Endothelial cell of umbilical vein (primary cell): ENCODE measurements at regions of chr12 and their contacts with region 1.

Region 1: DNA sequence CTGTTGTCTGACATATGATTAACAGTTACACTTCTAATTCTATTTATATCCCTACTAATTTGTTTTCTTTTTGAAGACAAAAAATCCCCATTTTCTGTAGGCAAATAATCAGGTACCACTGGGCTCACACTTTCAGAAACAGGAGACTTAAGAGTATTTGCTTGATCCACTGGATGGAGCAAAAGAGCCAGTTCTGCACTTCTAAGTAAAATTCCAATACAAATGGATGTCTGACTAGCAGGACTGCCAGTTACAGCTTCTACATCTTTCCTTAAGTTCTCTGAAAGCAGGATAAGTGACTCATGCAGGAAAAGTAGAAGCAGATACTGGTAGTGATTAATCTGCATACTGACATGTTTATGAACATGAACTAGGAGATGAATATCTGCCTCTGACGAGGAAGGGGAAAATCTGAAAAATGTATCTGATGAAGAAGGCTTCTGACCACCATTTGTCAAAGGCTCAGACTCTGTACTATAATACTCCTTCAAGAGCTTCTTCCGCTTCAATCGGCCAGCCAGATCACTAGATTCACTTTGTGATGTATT is 73.8 kb upstream of the ANKS1B start:
- DNase-seq: peak; percentile 94
- H3K4me3 ChIP-seq: no peak overlapping the region
- H3K27ac ChIP-seq: peak overlapping the region; percentile 58
- H3K4me1 ChIP-seq: peaks cover 14% of the 10 kb centered on the region
- H3K27me3 ChIP-seq: no peaks in the 10 kb centered on the region
- CTCF ChIP-seq: peak; percentile 24 to 35
- POLR2A ChIP-seq: peak; percentile 35

Region 2: GRCh38 chr12:99810718-99811593 is 247.6 kb before region 1 on chr12:
- CTCF ChIA-PET with region 1: no interaction called
- POLR2A ChIA-PET with region 1: no interaction called
- dilution Hi-C with region 1: no loop called
- intact Hi-C with region 1: loop called (anchors 1 kb)
- DNase-seq: peak; percentile 57
- H3K4me3 ChIP-seq: no peak overlapping the region
- H3K27ac ChIP-seq: no peak overlapping the region
- H3K4me1 ChIP-seq: no peaks in the 10 kb centered on the region
- H3K27me3 ChIP-seq: peaks cover 0 to 2% of the 10 kb centered on the region in 2 experiments
- CTCF ChIP-seq: no peak
- POLR2A ChIP-seq: no peak

Region 3: DNA sequence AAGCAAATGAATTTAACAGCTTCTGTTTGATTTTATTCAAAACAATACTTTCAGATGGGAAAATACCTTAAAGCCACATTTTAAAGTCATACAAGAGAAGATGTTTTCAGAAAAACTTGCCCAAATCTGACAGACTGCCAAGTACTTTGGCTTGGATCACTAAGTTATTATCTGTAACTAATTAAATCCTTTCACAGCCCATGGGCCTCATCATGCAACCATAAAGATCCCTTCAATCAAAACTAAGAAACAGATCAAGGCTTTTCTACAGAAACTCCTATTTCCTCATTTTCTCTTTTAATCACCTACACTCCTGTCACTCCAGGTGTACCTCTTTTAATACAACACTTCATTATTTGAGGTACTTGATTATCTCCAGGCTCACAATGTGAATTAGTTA is 56.0 kb after region 1 on chr12:
- CTCF ChIA-PET with region 1: no interaction called
- POLR2A ChIA-PET with region 1: no interaction called
- dilution Hi-C with region 1: no loop called
- intact Hi-C with region 1: no loop called
- DNase-seq: no peak
- H3K4me3 ChIP-seq: no peak overlapping the region
- H3K27ac ChIP-seq: no peak overlapping the region
- H3K4me1 ChIP-seq: no peaks in the 10 kb centered on the region
- H3K27me3 ChIP-seq: no peaks in the 10 kb centered on the region
- CTCF ChIP-seq: no peak
- POLR2A ChIP-seq: no peak

Region 4: DNA sequence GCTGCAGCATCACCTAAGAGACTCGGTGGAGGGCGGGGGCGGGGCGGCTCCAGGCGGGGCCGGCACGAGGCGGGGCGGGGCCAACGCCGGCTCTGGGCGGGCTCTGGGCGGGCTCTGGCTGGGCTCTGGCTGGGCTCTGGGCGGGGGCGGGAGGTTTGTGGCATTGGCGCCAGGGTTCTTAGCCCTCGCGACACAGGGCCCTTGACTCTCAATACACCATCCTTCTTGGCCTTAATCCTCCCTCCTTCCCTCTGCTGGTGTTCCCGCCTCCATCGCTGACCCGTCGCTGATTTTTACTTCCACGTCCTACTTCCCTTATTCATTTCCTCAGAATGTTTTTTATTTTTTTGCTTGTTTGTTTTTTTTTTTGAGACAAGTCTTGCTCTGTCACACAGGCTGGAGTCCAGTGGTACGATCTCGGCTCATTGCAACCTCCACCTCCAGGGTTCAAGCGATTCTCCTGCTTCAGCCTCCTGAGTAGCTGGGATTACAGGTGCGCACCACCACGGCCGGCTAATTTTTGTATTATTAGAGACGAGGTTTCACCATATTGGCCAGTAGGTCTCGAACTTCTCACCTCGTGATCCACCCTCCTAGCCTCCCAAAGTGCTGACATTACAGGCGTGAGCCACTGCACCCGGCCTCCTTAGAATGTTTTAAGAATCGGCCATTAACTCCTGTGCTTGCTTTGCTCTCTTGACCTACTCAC is 84.4 kb after region 1 on chr12 and contains the start of gene BLTP3B:
- CTCF ChIA-PET with region 1: no interaction called
- POLR2A ChIA-PET with region 1: no interaction called
- dilution Hi-C with region 1: no loop called
- intact Hi-C with region 1: loop called (anchors 1 kb)
- DNase-seq: peak; percentile 78
- H3K4me3 ChIP-seq: peak within 1 kb of the TSS; percentile 64 to 97 (median 74)
- H3K27ac ChIP-seq: peak within 1 kb of the TSS; percentile 91
- H3K4me1 ChIP-seq: peaks cover 5% of the 10 kb centered on the region
- H3K27me3 ChIP-seq: no peaks in the 10 kb centered on the region
- CTCF ChIP-seq: no peak
- POLR2A ChIP-seq: peak; percentile 53
- total RNA-seq, gene BLTP3B: 16.0 and 17.9 TPM in 2 replicates

Region 5: DNA sequence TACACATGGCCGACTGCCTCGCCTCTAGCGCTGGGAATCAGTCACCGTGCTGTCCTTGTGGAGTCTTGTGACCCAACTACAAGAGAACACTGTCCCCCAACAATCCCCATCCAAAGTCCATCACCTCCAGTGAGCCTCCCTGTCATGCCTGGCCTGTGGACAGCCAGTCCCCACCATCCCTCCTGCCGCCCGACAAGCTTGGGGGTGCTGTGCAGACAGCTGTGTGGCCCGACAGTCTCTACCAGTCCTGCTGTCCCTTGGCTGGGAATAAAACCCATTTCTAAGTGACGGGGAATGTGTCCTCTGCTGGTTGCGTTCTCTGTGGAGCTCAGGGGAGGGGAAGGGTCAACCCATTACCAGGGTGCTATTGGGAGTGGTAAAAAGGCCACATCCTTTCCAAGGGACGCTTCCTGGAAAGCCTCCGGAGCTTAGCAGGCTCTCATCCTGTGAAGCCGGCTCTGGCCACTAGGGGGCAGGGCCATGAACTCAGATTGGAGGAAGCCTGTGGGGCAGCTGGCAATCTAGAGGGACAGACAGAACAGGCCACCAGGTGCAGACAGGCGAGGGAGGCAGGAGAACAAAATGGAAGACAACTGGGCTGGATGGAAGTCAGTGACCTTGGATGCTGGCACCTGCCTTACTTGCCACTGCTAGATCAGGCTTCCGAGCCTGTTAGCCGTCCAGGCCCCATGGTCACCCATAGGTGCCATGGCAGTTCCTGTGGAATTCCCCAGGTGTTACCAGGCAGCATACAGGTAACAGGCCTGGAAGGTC is 96.1 kb after region 1 on chr12:
- CTCF ChIA-PET with region 1: interaction called, 19 read pairs
- POLR2A ChIA-PET with region 1: no interaction called
- dilution Hi-C with region 1: no loop called
- intact Hi-C with region 1: no loop called
- DNase-seq: peak; percentile 51
- H3K4me3 ChIP-seq: no peak overlapping the region
- H3K27ac ChIP-seq: no peak overlapping the region
- H3K4me1 ChIP-seq: no peaks in the 10 kb centered on the region
- H3K27me3 ChIP-seq: no peaks in the 10 kb centered on the region
- CTCF ChIP-seq: peak; percentile 91 to 93
- POLR2A ChIP-seq: no peak

Region 6: GRCh38 chr12:100200463-100201181 is 142.1 kb after region 1 on chr12 and contains the start of gene ACTR6:
- CTCF ChIA-PET with region 1: interaction called, 5 read pairs
- POLR2A ChIA-PET with region 1: no interaction called
- dilution Hi-C with region 1: no loop called
- intact Hi-C with region 1: loop called (anchors 1 kb)
- DNase-seq: peak; percentile 96
- H3K4me3 ChIP-seq: peak within 1 kb of the TSS; percentile 74 to 99 (median 95)
- H3K27ac ChIP-seq: peak within 1 kb of the TSS; percentile 74
- H3K4me1 ChIP-seq: peaks cover 4% of the 10 kb centered on the region
- H3K27me3 ChIP-seq: no peaks in the 10 kb centered on the region
- CTCF ChIP-seq: no peak
- POLR2A ChIP-seq: peak; percentile 83
- total RNA-seq, gene ACTR6: 23.2 and 24.7 TPM in 2 replicates

Region 7: DNA sequence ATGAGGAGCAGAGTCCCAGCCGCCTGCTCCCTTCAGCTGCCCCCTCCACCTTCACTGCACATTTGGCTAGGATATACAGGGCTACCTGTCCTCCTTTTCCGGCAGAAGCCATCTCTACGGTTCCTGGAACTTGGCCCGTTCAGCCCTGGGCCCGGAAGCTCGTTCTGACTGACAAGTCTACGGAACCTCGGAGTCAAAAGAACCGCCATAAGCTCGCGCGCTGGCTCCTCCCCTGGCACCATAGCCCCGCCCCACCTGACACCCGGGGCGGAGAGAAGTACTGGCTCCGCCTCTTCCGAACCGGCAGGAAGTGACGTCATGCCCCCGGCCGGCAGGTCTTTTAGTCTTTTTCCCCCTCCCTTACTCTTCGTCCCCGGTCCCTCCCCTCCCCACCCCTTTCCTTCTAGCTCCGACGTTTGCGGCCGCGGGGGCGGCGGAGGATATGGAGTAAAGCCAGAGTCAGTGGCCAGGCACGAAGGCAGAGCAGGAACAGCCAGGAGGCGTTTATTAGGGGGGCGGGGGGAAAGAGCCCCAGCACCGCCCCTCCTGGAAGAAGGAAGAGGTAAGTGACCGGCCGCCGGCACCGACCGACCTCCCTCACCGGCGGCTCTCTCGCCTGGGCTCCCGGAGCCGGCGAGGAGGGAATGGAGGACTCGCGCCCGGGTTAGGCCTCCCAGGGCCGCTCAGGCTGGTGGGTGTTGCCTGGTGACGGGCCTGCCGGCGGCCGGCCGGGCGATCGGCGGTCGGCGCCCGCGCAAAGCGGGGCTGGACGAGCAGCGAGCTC is 208.5 kb after region 1 on chr12 and contains the starts of genes DEPDC4 and SCYL2:
- CTCF ChIA-PET with region 1: interaction called, 5 read pairs
- POLR2A ChIA-PET with region 1: no interaction called
- dilution Hi-C with region 1: no loop called
- intact Hi-C with region 1: loop called (anchors 1 kb)
- DNase-seq: peak; percentile 98
- H3K4me3 ChIP-seq: peak within 1 kb of the TSS; percentile 78 to 97 (median 95)
- H3K27ac ChIP-seq: peak within 1 kb of the TSS; percentile 77
- H3K4me1 ChIP-seq: peaks cover 19% of the 10 kb centered on the region
- H3K27me3 ChIP-seq: no peaks in the 10 kb centered on the region
- CTCF ChIP-seq: no peak
- POLR2A ChIP-seq: peak; percentile 42
- total RNA-seq, gene DEPDC4: 0.44 and 0.66 TPM in 2 replicates
- total RNA-seq, gene SCYL2: 41.4 and 41.6 TPM in 2 replicates

Region 8: GRCh38 chr12:100329800-100330199 is 271.2 kb after region 1 on chr12:
- CTCF ChIA-PET with region 1: no interaction called
- POLR2A ChIA-PET with region 1: no interaction called
- dilution Hi-C with region 1: no loop called
- intact Hi-C with region 1: loop called (anchors 10 kb)
- DNase-seq: no peak
- H3K4me3 ChIP-seq: no peak overlapping the region
- H3K27ac ChIP-seq: no peak overlapping the region
- H3K4me1 ChIP-seq: no peaks in the 10 kb centered on the region
- H3K27me3 ChIP-seq: no peaks in the 10 kb centered on the region
- CTCF ChIP-seq: no peak
- POLR2A ChIP-seq: no peak